Activated naive CD4-positive, alpha-beta T cell treated with anti-CD3 and anti-CD28 coated beads, Interleukin-2, amount 10 ng/mL, durations not matched to agents 7 days and 5 days (primary cell): ENCODE measurements at regions of chr6 and their contacts with region 1.

Region 1: DNA sequence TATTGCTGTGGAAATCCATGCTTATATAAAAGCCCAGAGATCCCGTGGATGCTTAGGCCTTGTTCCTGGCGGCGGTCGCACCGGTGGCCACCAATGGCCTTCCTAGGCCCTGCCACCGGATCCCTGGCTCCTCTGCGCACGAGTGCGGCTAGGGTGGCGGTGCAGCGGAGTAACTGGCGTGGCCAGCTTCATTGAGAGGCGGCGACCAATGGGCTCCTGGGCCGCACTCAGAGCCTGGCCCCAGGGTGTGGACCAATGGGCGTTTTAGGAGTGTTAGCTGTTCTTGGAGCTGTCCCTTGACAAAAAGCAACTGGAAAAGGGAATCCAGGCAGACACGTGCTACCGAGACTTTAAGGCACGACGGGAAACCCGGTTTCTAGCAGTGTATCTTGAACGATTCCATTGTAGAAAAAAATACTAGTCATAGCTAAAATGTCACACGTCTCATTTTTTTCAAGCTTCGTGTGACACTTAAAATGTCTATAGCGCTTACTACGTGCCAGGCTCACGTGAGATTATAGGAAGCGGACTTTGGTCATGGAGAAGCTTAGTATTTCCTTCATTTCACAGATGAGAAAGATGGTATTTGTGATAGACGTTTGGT is 1.7 kb downstream of the AMD1 start:
- DNase-seq: peak; percentile 73
- H3K4me3 Mint-ChIP-seq: peak overlapping the region; percentile 97
- H3K27ac Mint-ChIP-seq: peak overlapping the region; percentile 99
- H3K4me1 Mint-ChIP-seq: peaks cover 50% of the 10 kb centered on the region
- H3K27me3 Mint-ChIP-seq: no peaks in the 10 kb centered on the region

Region 2: GRCh38 chr6:110682460-110682853 is 193.8 kb before region 1 on chr6:
- CTCF ChIA-PET with region 1: interaction called, 40 read pairs
- DNase-seq: peak; percentile 75
- H3K4me3 Mint-ChIP-seq: no peak overlapping the region
- H3K27ac Mint-ChIP-seq: no peak overlapping the region
- H3K4me1 Mint-ChIP-seq: peaks cover 15% of the 10 kb centered on the region
- H3K27me3 Mint-ChIP-seq: no peaks in the 10 kb centered on the region

Region 3: GRCh38 chr6:110815217-110816109 is 60.8 kb before region 1 on chr6 and contains the start of gene CDK19:
- CTCF ChIA-PET with region 1: interaction called, 27 read pairs
- DNase-seq: peak; percentile 99
- H3K4me3 Mint-ChIP-seq: peak within 1 kb of the TSS; percentile 99
- H3K27ac Mint-ChIP-seq: peak within 1 kb of the TSS; percentile 99
- H3K4me1 Mint-ChIP-seq: peaks cover 57% of the 10 kb centered on the region
- H3K27me3 Mint-ChIP-seq: no peaks in the 10 kb centered on the region

Region 4: DNA sequence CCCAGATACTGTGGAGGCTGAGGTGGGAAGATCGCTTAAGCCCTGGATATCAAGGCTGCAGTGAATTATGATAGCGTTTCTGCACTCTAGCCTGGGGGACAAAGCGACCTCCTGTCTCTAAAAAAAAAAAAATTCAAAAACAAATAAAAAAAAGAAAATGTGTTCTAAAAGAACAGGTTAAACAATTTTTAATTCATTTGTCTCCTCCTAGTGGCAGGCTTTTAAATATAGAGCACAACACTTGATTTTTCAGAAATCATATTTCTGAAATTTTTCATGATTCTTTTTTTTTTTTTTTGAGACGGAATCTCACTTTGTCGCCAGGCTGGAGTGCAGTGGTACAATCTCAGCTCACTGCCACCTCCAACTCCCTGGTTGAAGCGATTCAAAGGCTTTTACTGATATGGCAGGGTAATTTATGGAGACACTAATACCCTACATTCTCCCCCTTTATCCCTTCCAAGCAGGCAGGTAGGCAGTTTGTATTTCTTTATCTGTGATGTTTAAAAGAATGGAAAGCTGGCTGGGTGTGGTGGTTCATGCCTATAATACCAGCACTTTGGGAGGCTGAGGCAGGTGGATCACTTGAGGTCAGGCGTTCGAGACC is 73.5 kb after region 1 on chr6:
- CTCF ChIA-PET with region 1: interaction called, 12 read pairs
- DNase-seq: no peak
- H3K4me3 Mint-ChIP-seq: no peak overlapping the region
- H3K27ac Mint-ChIP-seq: no peak overlapping the region
- H3K4me1 Mint-ChIP-seq: peaks cover 8% of the 10 kb centered on the region
- H3K27me3 Mint-ChIP-seq: peaks cover 12% of the 10 kb centered on the region